ENCODE measurements at regions of chr14 and their contacts with region 1.

Region 1: DNA sequence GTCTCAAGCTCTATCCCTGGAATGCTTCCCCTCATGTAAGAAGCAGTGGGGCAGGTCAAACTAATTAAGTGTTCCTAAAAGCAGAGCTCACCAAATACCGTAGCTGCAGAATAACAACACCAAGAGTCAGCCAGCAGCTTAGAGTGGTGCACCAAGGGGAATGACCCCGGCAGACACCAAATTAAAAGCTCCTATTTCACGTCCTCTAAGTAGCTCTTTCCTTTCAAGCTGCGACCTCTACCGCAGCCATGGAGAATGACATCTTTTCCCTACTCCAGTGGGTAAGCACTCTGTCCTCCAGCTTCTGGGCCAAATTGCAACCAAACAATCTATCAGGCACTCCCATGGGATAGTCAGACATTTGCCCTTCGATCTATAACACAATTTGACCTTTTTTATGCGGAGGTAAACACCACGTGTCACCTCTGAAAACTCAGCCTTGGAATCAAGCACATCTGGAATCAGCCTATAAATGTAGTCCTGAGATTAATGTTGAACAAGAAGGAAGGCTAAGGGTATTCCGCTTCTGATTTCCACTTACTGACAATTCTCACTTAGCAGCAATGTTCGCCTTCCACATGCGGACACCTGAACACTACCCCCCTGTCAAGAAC is 67.6 kb upstream of the CDKN3 start:
- DNase-seq: peak; percentile 51
- H3K4me3 ChIP-seq: no peak overlapping the region
- H3K27ac ChIP-seq: no peak overlapping the region
- H3K4me1 ChIP-seq: peaks cover 10% of the 10 kb centered on the region
- H3K27me3 ChIP-seq: no peaks in the 10 kb centered on the region
- CTCF ChIP-seq: peak; percentile 88 to 94

Region 2: GRCh38 chr14:53793790-53794505 is 535.2 kb before region 1 on chr14:
- CTCF ChIA-PET with region 1: no interaction called
- dilution Hi-C with region 1: no loop called
- in situ Hi-C with region 1: loop called in 1 of 2 experiments (anchors 25 kb)
- intact Hi-C with region 1: no loop called
- DNase-seq: no peak
- H3K4me3 ChIP-seq: no peak overlapping the region
- H3K27ac ChIP-seq: no peak overlapping the region
- H3K4me1 ChIP-seq: no peaks in the 10 kb centered on the region
- H3K27me3 ChIP-seq: peaks cover 4% of the 10 kb centered on the region
- CTCF ChIP-seq: no peak

Region 3: DNA sequence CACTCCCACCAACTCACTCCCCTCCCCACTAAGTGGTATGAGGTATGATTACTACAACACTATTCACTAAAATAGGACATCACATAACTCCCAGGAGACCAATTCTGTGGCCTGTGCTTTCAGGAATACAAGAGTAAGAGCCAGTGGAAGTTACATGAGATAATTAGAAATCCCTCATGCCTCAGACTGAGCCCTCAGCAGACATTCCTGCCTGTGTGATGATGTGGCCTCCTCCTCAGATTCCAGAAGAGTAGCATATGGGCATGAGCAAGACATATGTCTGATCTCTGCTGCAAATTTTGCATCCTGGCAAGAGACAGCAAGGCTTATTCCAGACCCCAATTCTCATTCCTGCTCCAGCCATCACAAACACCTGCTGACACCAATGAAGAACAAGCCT is 326.5 kb before region 1 on chr14:
- CTCF ChIA-PET with region 1: no interaction called
- dilution Hi-C with region 1: no loop called
- in situ Hi-C with region 1: loop called in 1 of 2 experiments (anchors 25 kb)
- intact Hi-C with region 1: no loop called
- DNase-seq: no peak
- H3K4me3 ChIP-seq: no peak overlapping the region
- H3K27ac ChIP-seq: no peak overlapping the region
- H3K4me1 ChIP-seq: peaks cover 13% of the 10 kb centered on the region
- H3K27me3 ChIP-seq: no peaks in the 10 kb centered on the region
- CTCF ChIP-seq: no peak

Region 4: GRCh38 chr14:54085232-54085761 is 243.9 kb before region 1 on chr14:
- CTCF ChIA-PET with region 1: no interaction called
- dilution Hi-C with region 1: no loop called
- in situ Hi-C with region 1: no loop called
- intact Hi-C with region 1: loop called (anchors 5 kb)
- DNase-seq: no peak
- H3K4me3 ChIP-seq: no peak overlapping the region
- H3K27ac ChIP-seq: no peak overlapping the region
- H3K4me1 ChIP-seq: no peaks in the 10 kb centered on the region
- H3K27me3 ChIP-seq: no peaks in the 10 kb centered on the region
- CTCF ChIP-seq: no peak

Region 5: GRCh38 chr14:54182419-54183045 is 146.7 kb before region 1 on chr14:
- CTCF ChIA-PET with region 1: interaction called, 5 read pairs
- dilution Hi-C with region 1: no loop called
- in situ Hi-C with region 1: loop called in 1 of 2 experiments (anchors 25 kb)
- intact Hi-C with region 1: loop called (anchors 2 kb)
- DNase-seq: peak; percentile 86
- H3K4me3 ChIP-seq: no peak overlapping the region
- H3K27ac ChIP-seq: peak overlapping the region; percentile 70
- H3K4me1 ChIP-seq: peaks cover 15% of the 10 kb centered on the region
- H3K27me3 ChIP-seq: no peaks in the 10 kb centered on the region
- CTCF ChIP-seq: no peak

Region 6: DNA sequence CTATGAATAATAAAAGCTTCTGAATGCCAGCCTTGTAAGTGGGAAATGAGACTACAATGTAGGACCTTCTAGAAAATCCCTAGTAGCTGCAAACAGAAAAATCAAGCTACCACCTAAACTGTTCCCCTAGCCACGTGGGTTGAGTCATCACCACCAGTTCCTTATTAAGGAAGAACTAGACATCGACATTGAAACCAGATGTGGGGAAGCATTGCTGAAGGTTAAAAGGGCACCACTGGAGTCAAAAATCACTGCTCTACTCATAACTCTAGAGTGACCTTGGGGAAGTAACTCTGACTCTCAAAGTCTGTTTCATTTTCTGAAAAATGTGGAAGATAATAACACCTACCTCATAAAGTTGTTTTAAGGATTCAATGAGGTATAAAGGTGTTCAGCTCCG is 121.3 kb after region 1 on chr14:
- CTCF ChIA-PET with region 1: no interaction called
- dilution Hi-C with region 1: no loop called
- in situ Hi-C with region 1: no loop called
- intact Hi-C with region 1: no loop called
- DNase-seq: peak; percentile 14
- H3K4me3 ChIP-seq: no peak overlapping the region
- H3K27ac ChIP-seq: no peak overlapping the region
- H3K4me1 ChIP-seq: peaks cover 34% of the 10 kb centered on the region
- H3K27me3 ChIP-seq: no peaks in the 10 kb centered on the region
- CTCF ChIP-seq: no peak

Region 7: GRCh38 chr14:54652188-54652587 is 323.0 kb after region 1 on chr14:
- CTCF ChIA-PET with region 1: no interaction called
- dilution Hi-C with region 1: no loop called
- in situ Hi-C with region 1: no loop called
- intact Hi-C with region 1: no loop called
- DNase-seq: peak; percentile 98
- H3K4me3 ChIP-seq: peak overlapping the region in 2 of 3 experiments; percentile 37 to 40
- H3K27ac ChIP-seq: peak overlapping the region; percentile 94
- H3K4me1 ChIP-seq: peaks cover 45% of the 10 kb centered on the region
- H3K27me3 ChIP-seq: no peaks in the 10 kb centered on the region
- CTCF ChIP-seq: no peak

Measured in mammary epithelial cell (primary cell).